ENCODE measurements at regions of chr15 and their contacts with region 1.

Region 1: DNA sequence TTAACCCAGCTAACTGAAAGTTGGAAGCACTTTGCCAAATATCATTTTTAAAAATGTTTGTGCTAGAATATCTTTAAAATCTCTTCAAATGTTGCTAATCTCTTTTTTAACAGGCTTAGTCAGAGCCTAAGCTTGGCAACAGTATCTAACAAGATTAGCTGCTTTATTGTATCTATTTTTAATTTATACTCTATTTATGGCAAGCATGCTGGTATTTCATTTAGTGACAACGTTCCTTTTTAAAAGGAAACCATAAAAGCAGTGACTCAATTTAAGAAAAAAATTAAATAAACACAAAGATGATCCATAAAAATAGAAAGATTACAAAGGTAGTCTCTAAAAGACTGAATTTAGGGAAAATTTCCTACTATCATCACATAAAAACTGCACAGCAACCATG is 40.5 kb downstream of the SLC12A6 start:
- DNase-seq: no peak
- ATAC-seq: no peak
- H3K4me3 ChIP-seq: no peak overlapping the region
- H3K4me3 Mint-ChIP-seq: no peak overlapping the region
- H3K27ac ChIP-seq: no peak overlapping the region
- H3K27ac Mint-ChIP-seq: no peak overlapping the region
- H3K4me1 ChIP-seq: peaks cover 6 to 15% of the 10 kb centered on the region in 2 donors
- H3K4me1 Mint-ChIP-seq: peaks cover 43% of the 10 kb centered on the region
- H3K27me3 ChIP-seq: no peaks in the 10 kb centered on the region
- H3K27me3 Mint-ChIP-seq: no peaks in the 10 kb centered on the region
- CTCF ChIP-seq: no peak

Region 2: GRCh38 chr15:34331809-34332208 is 34.8 kb after region 1 on chr15:
- CTCF ChIA-PET with region 1: no interaction called
- POLR2A ChIA-PET with region 1: no interaction called
- intact Hi-C with region 1: no loop called
- DNase-seq: no peak
- ATAC-seq: no peak
- H3K4me3 ChIP-seq: no peak overlapping the region
- H3K4me3 Mint-ChIP-seq: peak overlapping the region; percentile 40
- H3K27ac ChIP-seq: peak overlapping the region; percentile 13 to 93
- H3K27ac Mint-ChIP-seq: peak overlapping the region; percentile 80
- H3K4me1 ChIP-seq: peaks cover 67 to 71% of the 10 kb centered on the region in 2 donors
- H3K4me1 Mint-ChIP-seq: peaks cover 73% of the 10 kb centered on the region
- H3K27me3 ChIP-seq: no peaks in the 10 kb centered on the region
- H3K27me3 Mint-ChIP-seq: no peaks in the 10 kb centered on the region
- CTCF ChIP-seq: no peak

Region 3: DNA sequence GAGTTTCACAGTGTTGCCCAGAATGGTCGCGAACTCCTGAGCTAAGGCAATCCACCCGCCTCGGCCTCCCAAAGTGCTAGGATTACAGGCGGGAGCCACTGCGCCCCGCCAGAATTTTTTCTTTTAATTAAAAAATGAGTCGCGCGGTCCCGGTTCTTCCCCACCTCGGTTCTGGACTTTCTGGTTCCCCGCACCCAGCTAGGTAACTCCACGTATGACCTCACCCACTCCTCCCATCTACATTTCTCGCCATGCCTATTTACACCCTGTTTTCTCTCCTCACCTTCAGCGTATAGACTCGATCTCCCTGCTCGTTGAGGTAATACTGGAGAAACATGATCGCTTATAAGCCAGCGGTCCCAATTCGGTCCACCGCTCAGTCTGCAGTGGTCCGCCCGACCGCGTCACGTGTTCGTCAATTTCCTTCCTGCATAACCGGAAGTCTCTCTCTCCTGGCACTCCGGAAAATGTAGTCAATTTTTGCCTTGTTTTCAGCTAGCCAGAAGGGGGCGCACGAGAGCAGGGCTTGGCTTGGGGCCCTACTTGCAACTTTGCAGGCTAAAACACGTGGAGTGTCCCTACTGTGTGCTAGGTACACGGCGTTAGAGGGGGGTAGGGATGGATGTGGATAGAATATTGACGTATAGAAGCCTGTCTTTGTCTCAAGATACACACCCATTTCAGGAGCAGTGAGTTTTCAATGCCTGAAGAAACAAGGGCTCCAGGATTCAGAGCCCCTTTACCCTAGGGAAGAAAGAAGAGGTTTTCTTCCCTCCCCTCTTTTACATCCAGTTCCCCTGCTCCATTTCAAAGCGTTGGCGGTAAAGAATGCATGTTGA is 45.9 kb after region 1 on chr15 and contains the starts of genes NOP10 and NUTM1:
- CTCF ChIA-PET with region 1: interaction called, 3 read pairs
- POLR2A ChIA-PET with region 1: interaction called, 11 read pairs
- intact Hi-C with region 1: no loop called
- DNase-seq: peak; percentile 93
- ATAC-seq: peak; percentile 85
- H3K4me3 ChIP-seq: peak within 1 kb of the TSS; percentile 94 to 99 (median 98)
- H3K4me3 Mint-ChIP-seq: peak within 1 kb of the TSS; percentile 85
- H3K27ac ChIP-seq: peak within 1 kb of the TSS; percentile 79 to 81
- H3K27ac Mint-ChIP-seq: peak within 1 kb of the TSS; percentile 63
- H3K4me1 ChIP-seq: peaks cover 16 to 18% of the 10 kb centered on the region in 2 donors
- H3K4me1 Mint-ChIP-seq: peaks cover 20% of the 10 kb centered on the region
- H3K27me3 ChIP-seq: no peaks in the 10 kb centered on the region
- H3K27me3 Mint-ChIP-seq: no peaks in the 10 kb centered on the region
- CTCF ChIP-seq: peak; percentile 97
- total RNA-seq, gene NOP10: 65.6 and 68.2 TPM in 2 replicates
- total RNA-seq, gene NUTM1: not detected in 2 replicates

Measured in B cell (primary cell).